ENCODE measurements at regions of chr4 and their contacts with region 1.

Region 1: DNA sequence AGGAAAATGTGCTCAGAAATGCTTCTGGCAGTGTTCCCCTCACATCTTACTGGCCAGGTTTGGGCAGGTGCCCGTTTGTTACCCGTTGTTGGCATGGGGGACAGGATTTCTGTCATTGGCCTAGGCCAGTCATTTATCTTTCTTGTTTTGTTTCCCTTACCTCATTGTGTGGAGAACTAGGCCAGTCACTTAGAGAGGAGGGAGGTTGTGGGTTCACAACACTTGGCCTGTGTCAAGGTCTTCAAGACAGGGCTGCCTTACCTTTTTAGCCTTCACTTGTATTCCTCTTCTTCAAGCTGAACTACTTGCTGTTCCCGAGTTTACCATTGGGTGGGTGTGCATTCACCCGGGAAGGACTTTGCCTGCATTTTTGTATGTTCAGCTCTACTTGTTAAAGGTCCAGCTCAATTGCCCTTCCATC is 17.7 kb downstream of the SNX25 start:
- DNase-seq: peak in 1 of 2 experiments; percentile 39
- H3K4me3 ChIP-seq: no peak overlapping the region
- H3K4me3 Mint-ChIP-seq: no peak overlapping the region
- H3K27ac Mint-ChIP-seq: no peak overlapping the region
- H3K4me1 ChIP-seq: no peaks in the 10 kb centered on the region
- H3K4me1 Mint-ChIP-seq: peaks cover 2% of the 10 kb centered on the region
- H3K27me3 ChIP-seq: no peaks in the 10 kb centered on the region
- H3K27me3 Mint-ChIP-seq: no peaks in the 10 kb centered on the region
- CTCF ChIP-seq: peak in 1 of 2 experiments; percentile 46

Region 2: GRCh38 chr4:185265942-185266341 is 38.8 kb after region 1 on chr4:
- CTCF ChIA-PET with region 1: no interaction called
- POLR2A ChIA-PET with region 1: no interaction called
- intact Hi-C with region 1: loop called (anchors 5 kb)
- DNase-seq: no peak
- H3K4me3 ChIP-seq: no peak overlapping the region
- H3K4me3 Mint-ChIP-seq: no peak overlapping the region
- H3K27ac Mint-ChIP-seq: no peak overlapping the region
- H3K4me1 ChIP-seq: peaks cover 18% of the 10 kb centered on the region
- H3K4me1 Mint-ChIP-seq: peaks cover 20% of the 10 kb centered on the region
- H3K27me3 ChIP-seq: no peaks in the 10 kb centered on the region
- H3K27me3 Mint-ChIP-seq: no peaks in the 10 kb centered on the region
- CTCF ChIP-seq: no peak

Region 3: GRCh38 chr4:185304944-185305690 is 78.0 kb after region 1 on chr4:
- CTCF ChIA-PET with region 1: interaction called, 5 read pairs
- POLR2A ChIA-PET with region 1: no interaction called
- intact Hi-C with region 1: loop called (anchors 1 kb)
- DNase-seq: peak; percentile 39 to 44
- H3K4me3 ChIP-seq: no peak overlapping the region
- H3K4me3 Mint-ChIP-seq: no peak overlapping the region
- H3K27ac Mint-ChIP-seq: peak overlapping the region; percentile 64
- H3K4me1 ChIP-seq: peaks cover 15% of the 10 kb centered on the region
- H3K4me1 Mint-ChIP-seq: peaks cover 18% of the 10 kb centered on the region
- H3K27me3 ChIP-seq: no peaks in the 10 kb centered on the region
- H3K27me3 Mint-ChIP-seq: no peaks in the 10 kb centered on the region
- CTCF ChIP-seq: peak; percentile 24 to 55

Measured in Caco-2 (cell line).